ENCODE measurements at regions of chr6 and their contacts with region 1.

Region 1: GRCh38 chr6:84150705-84151104 is 76.7 kb downstream of the CEP162 start:
- DNase-seq: no peak
- H3K4me3 ChIP-seq: no peak overlapping the region
- H3K27ac ChIP-seq: no peak overlapping the region
- H3K4me1 ChIP-seq: no peaks in the 10 kb centered on the region
- H3K27me3 ChIP-seq: no peaks in the 10 kb centered on the region
- CTCF ChIP-seq: no peak
- EP300 ChIP-seq: no peak
- POLR2A ChIP-seq: no peak

Region 2: GRCh38 chr6:83411731-83412130 is 739.0 kb before region 1 on chr6:
- in situ Hi-C with region 1: no loop called
- intact Hi-C with region 1: loop called (anchors 5 kb)
- DNase-seq: no peak
- H3K4me3 ChIP-seq: no peak overlapping the region
- H3K27ac ChIP-seq: no peak overlapping the region
- H3K4me1 ChIP-seq: no peaks in the 10 kb centered on the region
- H3K27me3 ChIP-seq: no peaks in the 10 kb centered on the region
- CTCF ChIP-seq: no peak
- EP300 ChIP-seq: no peak
- POLR2A ChIP-seq: no peak